ENCODE measurements at regions of chr22 and their contacts with region 1.

Region 1: DNA sequence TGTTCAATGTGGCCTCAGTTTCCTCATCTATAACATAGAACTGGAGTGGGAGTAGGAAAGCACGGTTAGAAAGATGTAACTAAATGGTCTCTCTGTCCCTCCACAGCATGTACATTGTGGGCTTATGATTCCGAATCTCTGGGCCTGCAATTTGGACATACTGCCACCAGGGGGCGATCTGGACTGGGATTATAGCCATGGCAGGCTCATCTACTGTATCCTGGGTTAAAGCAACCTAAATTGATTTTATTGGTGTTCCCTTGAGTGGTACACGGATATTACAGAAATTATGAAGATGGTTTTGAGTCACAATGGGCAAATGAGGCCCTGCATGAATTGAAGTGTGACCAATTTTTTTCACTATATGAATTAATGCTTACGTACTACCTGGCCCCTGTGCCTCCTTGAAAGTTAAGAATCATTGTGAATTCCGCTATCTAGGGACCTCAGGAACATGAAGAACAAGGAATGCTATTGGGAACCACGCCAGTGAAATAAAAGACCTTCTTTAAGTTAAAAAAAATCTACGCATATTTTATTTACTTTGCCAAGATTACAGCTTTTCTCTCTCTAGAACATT is 32.9 kb downstream of the TST start:
- DNase-seq: peak; percentile 5
- ATAC-seq: no peak
- H3K4me3 ChIP-seq: no peak overlapping the region
- H3K27ac ChIP-seq: no peak overlapping the region
- H3K4me1 ChIP-seq: no peaks in the 10 kb centered on the region
- H3K27me3 ChIP-seq: no peaks in the 10 kb centered on the region
- CTCF ChIP-seq: peak; percentile 86

Region 2: GRCh38 chr22:37025500-37026075 is 39.3 kb after region 1 on chr22:
- CTCF ChIA-PET with region 1: interaction called, 11 read pairs
- POLR2A ChIA-PET with region 1: no interaction called
- in situ Hi-C with region 1: no loop called
- intact Hi-C with region 1: no loop called
- DNase-seq: no peak
- ATAC-seq: no peak
- H3K4me3 ChIP-seq: no peak overlapping the region
- H3K27ac ChIP-seq: no peak overlapping the region
- H3K4me1 ChIP-seq: no peaks in the 10 kb centered on the region
- H3K27me3 ChIP-seq: no peaks in the 10 kb centered on the region
- CTCF ChIP-seq: no peak

Region 3: GRCh38 chr22:37208406-37209139 is 222.2 kb after region 1 on chr22:
- CTCF ChIA-PET with region 1: no interaction called
- POLR2A ChIA-PET with region 1: no interaction called
- in situ Hi-C with region 1: no loop called
- intact Hi-C with region 1: no loop called
- DNase-seq: no peak
- ATAC-seq: no peak
- H3K4me3 ChIP-seq: no peak overlapping the region
- H3K27ac ChIP-seq: no peak overlapping the region
- H3K4me1 ChIP-seq: no peaks in the 10 kb centered on the region
- H3K27me3 ChIP-seq: no peaks in the 10 kb centered on the region
- CTCF ChIP-seq: no peak

Region 4: GRCh38 chr22:37218771-37219411 is 232.6 kb after region 1 on chr22:
- CTCF ChIA-PET with region 1: no interaction called
- POLR2A ChIA-PET with region 1: no interaction called
- in situ Hi-C with region 1: no loop called
- intact Hi-C with region 1: no loop called
- DNase-seq: no peak
- ATAC-seq: no peak
- H3K4me3 ChIP-seq: no peak overlapping the region
- H3K27ac ChIP-seq: no peak overlapping the region
- H3K4me1 ChIP-seq: no peaks in the 10 kb centered on the region
- H3K27me3 ChIP-seq: no peaks in the 10 kb centered on the region
- CTCF ChIP-seq: no peak